HEK293T (cell line): ENCODE measurements at regions of chr12 and their contacts with region 1.

Region 1: GRCh38 chr12:8823565-8824300 is 1.3 kb downstream of the A2ML1 start:
- DNase-seq: peak; percentile 58

Region 2: DNA sequence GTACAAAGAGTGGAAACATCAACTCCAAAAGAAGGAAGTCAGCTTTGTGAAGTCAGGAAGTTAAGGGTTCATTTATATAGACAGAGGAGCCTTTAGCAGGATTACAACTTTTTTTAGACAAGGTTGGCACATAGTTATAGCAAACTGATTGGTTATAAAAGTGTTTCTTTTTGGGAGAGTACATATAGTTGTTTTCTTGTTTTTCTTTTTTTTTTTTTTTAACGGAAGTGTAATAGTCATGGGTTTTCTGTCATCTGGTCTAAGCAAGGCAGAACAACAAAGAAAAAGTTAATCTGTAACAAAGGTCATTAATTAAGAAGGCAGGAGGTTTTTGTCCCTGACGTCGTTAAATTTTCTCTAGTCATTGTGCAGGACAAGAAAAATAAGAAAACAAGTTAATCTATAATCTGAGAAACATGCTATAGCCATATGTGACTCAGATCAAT is 148.1 kb before region 1 on chr12:
- CTCF ChIA-PET with region 1: interaction called, 21 read pairs
- POLR2A ChIA-PET with region 1: no interaction called
- DNase-seq: no peak

Region 3: GRCh38 chr12:8681041-8681902 is 142.5 kb before region 1 on chr12:
- CTCF ChIA-PET with region 1: interaction called, 21 read pairs
- POLR2A ChIA-PET with region 1: no interaction called
- DNase-seq: no peak

Region 4: DNA sequence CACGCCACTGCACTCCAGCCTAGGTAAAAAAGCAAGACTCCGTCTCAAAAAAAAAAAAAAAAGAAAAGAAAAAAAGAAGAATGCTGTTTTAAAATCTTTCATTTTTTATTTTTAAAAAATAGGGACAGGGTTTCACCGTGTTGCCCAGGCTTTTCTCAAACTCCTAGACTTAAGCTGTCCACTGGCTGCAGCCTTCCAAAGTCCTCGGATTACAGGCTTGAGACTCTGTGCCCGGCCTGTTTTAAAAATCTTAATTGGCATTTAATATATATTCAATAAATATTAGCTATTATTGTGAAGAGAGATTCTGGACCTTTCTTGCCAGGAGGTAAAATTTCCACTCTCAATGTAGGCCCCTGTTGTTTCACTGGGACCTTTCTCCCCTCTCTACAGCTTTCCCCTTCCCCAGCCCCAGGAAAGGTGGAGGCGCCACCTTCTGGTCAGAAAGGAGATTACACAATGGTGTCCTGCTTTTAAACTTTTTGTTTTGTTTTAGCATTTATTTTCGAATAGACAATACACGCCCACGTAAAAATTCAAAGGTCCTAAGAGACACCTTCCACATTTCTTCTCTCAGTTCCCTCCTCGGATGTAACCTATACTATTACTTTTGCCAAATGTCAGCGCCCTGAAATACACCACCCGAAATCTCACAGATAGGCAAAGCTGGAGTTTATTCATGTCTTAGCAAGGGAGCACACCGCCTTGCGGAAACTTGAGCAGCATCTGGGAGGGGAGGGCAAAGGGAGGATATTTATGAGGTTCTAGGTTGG is 66.8 kb after region 1 on chr12:
- CTCF ChIA-PET with region 1: interaction called, 13 read pairs
- POLR2A ChIA-PET with region 1: no interaction called
- DNase-seq: peak; percentile 72

Region 5: DNA sequence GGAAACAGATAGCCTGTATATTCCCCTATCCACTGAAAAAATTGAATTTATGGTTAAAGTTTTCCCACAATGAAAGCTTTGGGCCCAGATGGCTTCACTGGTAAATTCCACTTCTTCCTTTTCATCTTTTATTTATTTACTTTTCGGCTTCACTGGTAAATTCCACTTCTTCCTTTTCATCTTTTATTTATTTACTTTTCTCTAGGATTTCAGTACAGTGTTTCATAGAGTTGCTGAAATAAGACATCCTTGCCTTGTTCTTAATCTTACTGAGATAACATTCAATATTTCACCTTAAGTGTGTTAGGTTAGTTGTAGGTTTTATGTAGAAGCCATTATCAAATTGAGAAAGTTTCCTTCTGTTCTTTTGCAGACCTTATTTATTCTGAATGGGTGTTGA is 146.7 kb after region 1 on chr12:
- CTCF ChIA-PET with region 1: no interaction called
- POLR2A ChIA-PET with region 1: no interaction called
- DNase-seq: no peak